ENCODE measurements at regions of chr6 and their contacts with region 1.

Region 1: DNA sequence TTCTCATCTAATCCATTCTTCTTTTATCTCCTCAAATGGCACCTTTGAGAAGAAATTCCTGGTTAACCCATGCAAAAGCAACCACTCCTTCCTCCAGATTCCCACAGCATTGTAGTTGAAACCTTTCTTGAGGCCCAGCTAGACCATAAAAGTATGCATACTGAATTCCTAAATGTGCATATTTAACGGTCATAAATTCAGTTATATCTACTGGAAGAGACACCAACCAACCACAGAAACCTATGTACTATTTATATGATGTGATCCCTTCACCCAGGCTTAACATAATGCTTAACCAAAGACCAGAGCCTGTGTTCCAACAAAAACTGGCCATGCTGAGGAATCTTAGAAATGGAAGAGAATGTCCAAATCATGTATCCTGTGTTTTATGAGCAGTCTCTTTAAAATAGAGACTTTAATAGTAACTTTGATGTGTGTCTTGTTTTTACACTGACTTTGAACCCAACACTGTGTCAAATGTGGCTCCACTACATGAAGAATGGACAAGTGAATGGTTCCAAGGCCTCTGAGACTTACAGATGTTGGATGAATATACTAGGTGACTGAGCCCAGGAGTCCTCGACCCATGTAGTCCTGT is 11.4 kb upstream of the TAF8 start:
- DNase-seq: no peak
- H3K4me3 ChIP-seq: no peak overlapping the region
- CTCF ChIP-seq: no peak

Region 2: DNA sequence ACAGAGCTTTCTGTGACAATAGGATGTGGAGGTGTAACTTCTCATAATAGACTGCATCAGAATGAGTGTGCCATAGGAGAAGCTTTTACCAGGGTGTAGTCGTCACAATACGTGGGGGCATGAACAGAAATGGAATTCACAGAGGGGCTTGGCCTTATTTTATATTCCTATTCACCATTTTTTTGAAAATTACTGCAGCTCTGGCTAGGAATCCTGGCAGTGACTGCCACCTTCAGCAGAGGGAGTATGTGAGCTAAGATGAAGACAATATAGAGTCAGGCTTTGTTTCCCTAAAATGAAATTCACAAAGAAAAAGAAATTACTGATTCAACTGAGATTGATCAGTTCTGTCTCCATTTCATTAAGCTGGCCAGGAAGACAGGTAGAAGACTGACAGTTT is 237.5 kb before region 1 on chr6:
- in situ Hi-C with region 1: loop called (anchors 5 kb)
- DNase-seq: no peak
- H3K4me3 ChIP-seq: no peak overlapping the region
- CTCF ChIP-seq: peak; percentile 81

Region 3: DNA sequence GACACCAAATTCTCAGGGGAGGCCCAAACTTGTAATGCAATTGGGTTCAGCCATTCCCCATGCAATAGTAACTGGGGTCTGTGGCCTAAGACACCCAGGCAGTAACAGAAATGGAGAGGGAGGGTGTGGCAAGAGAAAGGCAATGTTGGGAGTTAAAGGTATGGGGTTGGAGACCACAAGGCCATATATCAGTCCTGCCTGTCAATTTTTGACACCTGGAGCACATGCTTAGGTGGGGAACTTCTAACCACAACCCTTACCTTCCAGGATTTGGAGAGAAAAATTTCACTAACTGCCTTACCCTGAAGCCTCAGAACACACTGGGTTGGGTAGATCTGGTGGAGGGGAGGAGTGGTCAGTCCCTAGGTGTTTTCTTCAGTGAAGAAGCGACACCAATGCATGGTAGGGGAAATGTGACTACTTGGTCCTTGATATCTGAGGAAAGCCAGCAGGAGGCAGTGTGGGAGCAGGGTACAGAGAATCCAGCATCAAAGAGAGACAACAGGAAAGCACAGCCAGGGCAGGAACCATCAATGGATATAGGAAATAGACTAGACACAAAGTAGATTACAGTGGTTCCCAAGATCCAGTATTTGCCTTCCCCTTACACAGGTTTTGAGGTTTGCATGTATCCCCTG is 136.9 kb before region 1 on chr6:
- in situ Hi-C with region 1: no loop called
- DNase-seq: no peak
- H3K4me3 ChIP-seq: no peak overlapping the region
- CTCF ChIP-seq: no peak

Region 4: GRCh38 chr6:41934278-41935192 is 104.4 kb before region 1 on chr6:
- in situ Hi-C with region 1: loop called (anchors 5 kb)
- DNase-seq: no peak
- H3K4me3 ChIP-seq: no peak overlapping the region
- CTCF ChIP-seq: no peak

Region 5: DNA sequence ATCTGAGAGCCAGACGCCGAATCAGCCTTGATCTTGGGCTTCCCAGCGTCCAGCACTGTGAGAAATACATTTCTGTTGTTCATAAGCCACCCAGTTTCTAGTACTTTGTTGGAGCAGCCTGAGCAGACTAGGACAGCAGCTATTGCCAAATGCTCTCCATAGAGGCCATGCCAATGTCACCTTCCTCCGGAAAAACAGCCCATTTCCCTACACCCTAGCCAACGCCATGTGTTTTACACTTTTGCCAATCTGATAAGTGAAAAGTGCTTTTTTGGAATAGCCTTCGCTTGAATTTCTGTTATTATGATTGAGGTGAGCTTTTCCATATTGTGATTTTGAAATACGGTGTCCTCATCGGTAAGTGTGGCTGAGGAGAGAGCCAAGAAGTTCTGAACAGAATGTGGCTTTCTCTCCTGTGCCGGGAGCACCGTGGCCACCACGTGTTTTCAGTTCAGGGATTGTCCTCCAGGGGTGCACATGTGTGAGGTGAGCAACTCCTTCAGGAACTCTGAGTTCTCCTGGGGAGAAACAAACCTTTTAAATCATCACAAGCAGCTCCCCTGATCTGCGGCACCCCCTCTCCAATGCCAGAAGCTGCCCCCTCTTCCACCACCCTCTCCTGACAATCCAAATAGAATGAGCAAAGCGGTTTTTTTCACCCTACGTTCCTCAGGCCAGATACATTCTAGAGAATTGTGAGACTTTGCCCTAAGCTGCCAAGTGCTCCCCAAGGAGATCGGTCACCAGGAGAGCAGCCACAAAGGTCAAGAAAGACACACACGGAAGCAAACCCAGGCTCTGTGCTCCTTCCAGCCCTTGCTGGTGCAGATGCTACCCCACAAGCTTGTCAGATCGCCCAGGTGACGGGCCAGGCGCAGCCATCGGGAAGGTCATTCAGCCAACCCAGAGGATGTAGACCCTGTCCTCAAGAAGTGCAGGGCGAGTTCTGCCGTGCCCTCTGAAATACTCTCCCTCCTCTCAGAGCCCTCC is 47.4 kb after region 1 on chr6:
- in situ Hi-C with region 1: no loop called
- DNase-seq: no peak
- H3K4me3 ChIP-seq: no peak overlapping the region
- CTCF ChIP-seq: peak; percentile 31

Measured in astrocyte of the cerebellum (primary cell).